CD8-positive, alpha-beta T cell (primary cell): ENCODE measurements at regions of chr20 and their contacts with region 1.

Region 1: DNA sequence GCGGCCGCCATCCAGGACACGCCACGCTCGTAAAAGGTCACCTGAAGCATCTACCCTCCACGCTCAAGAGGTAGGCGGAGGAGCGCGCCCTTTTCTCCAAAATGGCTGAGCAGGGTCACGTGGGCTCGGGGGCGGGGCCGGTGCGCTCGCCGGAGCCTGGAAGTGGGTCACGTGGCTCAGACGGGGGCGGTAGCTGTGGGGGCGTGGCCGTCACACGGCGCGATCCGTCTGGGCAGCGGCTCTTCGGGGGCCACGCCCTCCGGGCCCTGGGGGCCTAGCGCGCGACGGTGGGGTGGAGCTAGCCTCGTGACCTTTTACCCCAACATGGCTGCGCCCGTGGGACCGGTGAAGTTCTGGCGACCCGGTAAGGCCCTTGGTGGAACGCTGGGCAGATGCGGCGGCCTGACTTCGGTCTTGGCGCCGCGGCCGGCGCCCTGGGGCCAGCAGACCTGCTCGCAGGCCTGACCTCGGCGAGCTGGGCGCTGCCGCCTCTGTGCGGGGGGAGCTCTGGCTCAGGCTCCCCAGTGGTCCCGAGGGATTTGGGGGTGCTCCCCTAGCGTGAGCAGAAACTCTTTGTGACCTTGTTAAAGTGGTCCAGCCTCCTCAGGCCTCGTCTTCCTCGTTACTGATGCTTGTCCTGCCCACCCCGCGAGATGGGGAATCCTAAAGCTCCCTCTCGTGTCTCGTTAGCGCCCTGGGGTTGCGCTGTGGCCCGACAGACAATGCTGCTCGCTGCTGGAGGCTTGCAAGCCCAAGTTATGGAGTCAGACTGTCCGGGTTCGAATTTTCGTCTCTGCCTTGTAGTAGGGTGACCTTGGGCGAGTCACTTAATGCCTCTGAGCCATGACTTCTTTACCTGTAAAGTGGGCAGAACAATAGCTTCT is at the start of gene DHX35:
- DNase-seq: peak; percentile 96 to 100 (median 98)
- ATAC-seq: peak; percentile 99
- H3K4me3 ChIP-seq: peak within 1 kb of the TSS; percentile 83 to 97
- H3K4me3 Mint-ChIP-seq: peak within 1 kb of the TSS; percentile 94
- H3K27ac ChIP-seq: peak within 1 kb of the TSS; percentile 76 to 82
- H3K27ac Mint-ChIP-seq: peak within 1 kb of the TSS; percentile 97
- H3K4me1 ChIP-seq: peaks cover 19% of the 10 kb centered on the region
- H3K4me1 Mint-ChIP-seq: peaks cover 28% of the 10 kb centered on the region
- H3K27me3 ChIP-seq: no peaks in the 10 kb centered on the region
- H3K27me3 Mint-ChIP-seq: no peaks in the 10 kb centered on the region
- CTCF ChIP-seq: no peak
- total RNA-seq, gene DHX35: 8.5 to 8.8 TPM

Region 2: GRCh38 chr20:38033310-38034107 is 928.8 kb before region 1 on chr20 and contains the starts of genes RPRD1B and TTI1:
- CTCF ChIA-PET with region 1: no interaction called
- POLR2A ChIA-PET with region 1: no interaction called
- intact Hi-C with region 1: loop called in 1 of 2 experiments (anchors 10 kb)
- DNase-seq: peak; percentile 77 to 95 (median 88)
- ATAC-seq: peak; percentile 86
- H3K4me3 ChIP-seq: peak within 1 kb of the TSS; percentile 84 to 94
- H3K4me3 Mint-ChIP-seq: peak within 1 kb of the TSS; percentile 98
- H3K27ac ChIP-seq: peak within 1 kb of the TSS; percentile 92 to 98
- H3K27ac Mint-ChIP-seq: peak within 1 kb of the TSS; percentile 98
- H3K4me1 ChIP-seq: peaks cover 51% of the 10 kb centered on the region
- H3K4me1 Mint-ChIP-seq: peaks cover 73% of the 10 kb centered on the region
- H3K27me3 ChIP-seq: no peaks in the 10 kb centered on the region
- H3K27me3 Mint-ChIP-seq: no peaks in the 10 kb centered on the region
- CTCF ChIP-seq: no peak
- total RNA-seq, gene RPRD1B: 73.3 to 79.4 TPM
- total RNA-seq, gene TTI1: 12.6 to 15.7 TPM

Region 3: DNA sequence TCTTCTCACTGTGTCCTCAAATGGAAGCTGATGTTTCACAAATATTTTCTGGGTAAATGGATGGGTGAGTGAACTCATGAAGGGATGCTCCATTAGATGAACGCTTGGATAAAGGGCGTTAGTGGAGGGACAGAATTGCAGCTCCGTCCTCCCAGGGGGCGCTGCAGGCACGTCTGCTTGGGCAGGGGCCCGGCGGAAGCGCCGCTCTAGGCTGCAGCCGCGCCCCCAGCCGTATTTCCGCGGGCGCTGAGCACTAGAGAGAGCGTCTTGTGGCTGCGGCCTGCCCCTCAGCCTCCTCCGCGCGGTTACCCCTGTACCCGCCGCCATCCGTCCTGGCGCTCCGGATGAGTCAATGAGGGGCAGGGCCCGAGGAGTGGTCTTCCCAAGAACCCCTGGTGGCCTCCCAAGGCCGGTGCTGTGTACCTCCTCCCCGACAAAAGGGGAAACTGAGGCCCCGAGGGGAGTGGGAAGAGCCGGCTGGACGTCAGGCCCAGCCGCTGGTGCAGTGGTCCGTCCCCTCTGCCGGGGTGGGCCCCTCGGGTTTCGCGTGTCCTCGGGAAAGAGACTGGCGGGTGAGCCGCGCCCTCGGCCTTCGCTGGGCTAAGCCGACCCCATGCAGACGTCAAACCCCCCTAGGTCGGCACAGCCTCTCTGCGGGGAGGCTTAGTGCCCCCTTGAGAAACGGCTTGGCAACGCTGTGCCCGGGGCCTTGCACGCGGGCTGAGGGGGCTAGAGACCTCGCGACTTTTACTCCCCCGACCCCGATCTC is 515.7 kb before region 1 on chr20:
- CTCF ChIA-PET with region 1: no interaction called
- POLR2A ChIA-PET with region 1: no interaction called
- intact Hi-C with region 1: loop called in 1 of 2 experiments (anchors 10 kb)
- DNase-seq: peak; percentile 84 to 96 (median 92)
- ATAC-seq: peak; percentile 97
- H3K4me3 ChIP-seq: peak overlapping the region; percentile 84
- H3K4me3 Mint-ChIP-seq: peak overlapping the region; percentile 88
- H3K27ac ChIP-seq: peak overlapping the region; percentile 65 to 83
- H3K27ac Mint-ChIP-seq: peak overlapping the region; percentile 94
- H3K4me1 ChIP-seq: peaks cover 19% of the 10 kb centered on the region
- H3K4me1 Mint-ChIP-seq: peaks cover 25% of the 10 kb centered on the region
- H3K27me3 ChIP-seq: no peaks in the 10 kb centered on the region
- H3K27me3 Mint-ChIP-seq: peaks cover 2% of the 10 kb centered on the region
- CTCF ChIP-seq: peak; percentile 99

Region 4: GRCh38 chr20:38926142-38926933 is 35.9 kb before region 1 on chr20 and contains the start of gene FAM83D:
- CTCF ChIA-PET with region 1: interaction called, 6 read pairs
- POLR2A ChIA-PET with region 1: interaction called, 12 read pairs
- intact Hi-C with region 1: loop called (anchors 1 kb)
- DNase-seq: peak; percentile 77 to 96 (median 91)
- ATAC-seq: peak; percentile 93
- H3K4me3 ChIP-seq: peak within 1 kb of the TSS; percentile 52 to 78
- H3K4me3 Mint-ChIP-seq: peak within 1 kb of the TSS; percentile 79
- H3K27ac ChIP-seq: peak within 1 kb of the TSS; percentile 35 to 47
- H3K27ac Mint-ChIP-seq: peak within 1 kb of the TSS; percentile 34
- H3K4me1 ChIP-seq: peaks cover 14% of the 10 kb centered on the region
- H3K4me1 Mint-ChIP-seq: peaks cover 25% of the 10 kb centered on the region
- H3K27me3 ChIP-seq: no peaks in the 10 kb centered on the region
- H3K27me3 Mint-ChIP-seq: no peaks in the 10 kb centered on the region
- CTCF ChIP-seq: no peak
- total RNA-seq, gene FAM83D: 5.3 to 6.3 TPM

Region 5: DNA sequence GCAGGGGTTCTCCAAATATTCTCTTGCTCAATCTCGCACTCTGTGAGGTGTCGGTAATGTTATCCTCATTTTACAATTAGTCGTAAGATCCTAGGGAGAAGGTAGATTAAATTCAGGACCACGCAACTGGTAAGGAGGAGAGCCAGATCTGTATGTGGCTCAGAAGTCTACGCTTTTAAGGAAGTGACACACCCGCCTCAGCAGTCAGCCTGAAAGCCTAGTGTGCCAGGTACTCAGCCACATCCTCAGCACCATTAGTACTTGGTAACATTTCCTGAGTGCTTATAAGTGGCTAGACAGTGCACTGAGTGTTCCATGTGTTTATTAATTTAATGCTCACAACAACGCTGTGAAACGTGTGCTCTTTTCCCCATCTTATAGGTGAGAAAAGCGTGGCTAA is 63.6 kb after region 1 on chr20:
- CTCF ChIA-PET with region 1: no interaction called
- POLR2A ChIA-PET with region 1: no interaction called
- intact Hi-C with region 1: no loop called
- DNase-seq: peak in 2 of 9 experiments; percentile 25 to 38
- ATAC-seq: peak; percentile 54
- H3K4me3 ChIP-seq: no peak overlapping the region
- H3K4me3 Mint-ChIP-seq: no peak overlapping the region
- H3K27ac ChIP-seq: peak overlapping the region in 1 of 2 experiments; percentile 33
- H3K27ac Mint-ChIP-seq: peak overlapping the region; percentile 52
- H3K4me1 ChIP-seq: peaks cover 6% of the 10 kb centered on the region
- H3K4me1 Mint-ChIP-seq: peaks cover 17% of the 10 kb centered on the region
- H3K27me3 ChIP-seq: no peaks in the 10 kb centered on the region
- H3K27me3 Mint-ChIP-seq: no peaks in the 10 kb centered on the region
- CTCF ChIP-seq: no peak

Region 6: DNA sequence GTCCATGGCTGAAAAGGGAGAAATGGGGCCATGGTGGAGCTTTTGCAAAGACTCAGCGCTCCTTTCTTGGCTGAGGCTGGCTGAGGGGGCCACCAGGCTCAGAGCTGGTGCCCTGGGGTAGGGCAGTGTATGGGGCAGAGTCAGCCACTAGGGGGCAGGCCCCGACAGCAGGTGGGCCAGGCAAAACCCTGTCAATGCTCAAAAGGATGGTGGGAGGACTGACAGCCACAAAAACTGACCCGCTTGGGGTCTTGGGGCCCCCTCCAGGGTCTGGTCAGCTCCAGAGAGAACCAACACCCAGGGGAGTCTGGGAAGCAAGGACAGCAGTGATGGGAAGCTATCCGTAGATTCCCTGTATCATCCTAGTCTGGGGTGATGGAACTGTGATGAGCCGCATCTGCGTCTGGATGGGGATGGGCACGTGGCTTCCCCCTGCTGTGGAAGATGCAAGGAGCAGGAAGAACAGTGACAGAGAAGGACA is 306.7 kb after region 1 on chr20:
- CTCF ChIA-PET with region 1: no interaction called
- POLR2A ChIA-PET with region 1: no interaction called
- intact Hi-C with region 1: no loop called
- DNase-seq: peak in 5 of 9 experiments; percentile 4 to 34 (median 24)
- ATAC-seq: no peak
- H3K4me3 ChIP-seq: no peak overlapping the region
- H3K4me3 Mint-ChIP-seq: no peak overlapping the region
- H3K27ac ChIP-seq: no peak overlapping the region
- H3K27ac Mint-ChIP-seq: no peak overlapping the region
- H3K4me1 ChIP-seq: no peaks in the 10 kb centered on the region
- H3K4me1 Mint-ChIP-seq: no peaks in the 10 kb centered on the region
- H3K27me3 ChIP-seq: no peaks in the 10 kb centered on the region
- H3K27me3 Mint-ChIP-seq: no peaks in the 10 kb centered on the region
- CTCF ChIP-seq: peak; percentile 47